ENCODE measurements at regions of chr1 and their contacts with region 1.

Region 1: DNA sequence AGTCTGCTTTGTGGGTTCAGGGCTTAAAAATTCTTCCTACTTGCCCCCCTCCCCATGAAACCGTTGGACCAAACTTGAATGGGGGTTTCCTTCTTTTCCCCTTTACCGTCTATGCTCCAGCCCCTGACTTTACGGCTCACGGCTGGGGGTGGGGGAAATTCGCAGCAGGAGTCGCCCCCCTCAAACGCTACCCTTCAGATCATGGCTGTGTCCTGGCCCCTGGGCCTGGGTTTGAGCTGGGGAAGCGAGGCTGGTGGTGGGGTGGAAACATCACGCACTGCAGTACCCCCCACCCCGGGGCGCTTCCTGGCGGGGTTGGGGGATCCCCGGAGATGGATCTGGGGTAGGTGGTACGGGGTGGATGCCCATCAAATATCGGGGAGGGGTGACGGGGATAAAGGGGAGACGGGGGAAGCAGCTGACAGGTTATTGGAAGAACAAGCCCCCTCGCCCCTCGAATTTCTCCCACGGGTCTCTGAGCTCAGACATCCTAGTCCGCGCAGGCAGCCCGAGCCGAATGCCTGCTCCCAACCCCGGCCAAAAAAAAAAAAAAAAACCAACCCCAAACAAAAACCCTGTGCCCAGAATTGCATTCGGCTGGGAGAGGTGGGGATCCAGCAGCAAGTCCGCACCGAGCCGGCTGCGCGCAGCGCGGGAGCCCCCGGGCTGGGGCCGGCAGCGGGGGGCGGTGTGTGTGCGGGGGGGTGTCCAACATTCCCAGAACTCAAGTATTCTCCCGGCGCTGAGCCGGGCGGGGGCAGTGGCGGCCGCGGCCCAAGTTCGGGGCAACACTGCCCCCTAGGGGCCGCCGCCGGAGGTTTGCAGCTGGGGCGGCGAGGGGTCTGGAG is 59.0 kb upstream of the ACOT11 start:
- DNase-seq: no peak
- H3K4me3 ChIP-seq: peak overlapping the region; percentile 56
- CTCF ChIP-seq: peak; percentile 84

Region 2: DNA sequence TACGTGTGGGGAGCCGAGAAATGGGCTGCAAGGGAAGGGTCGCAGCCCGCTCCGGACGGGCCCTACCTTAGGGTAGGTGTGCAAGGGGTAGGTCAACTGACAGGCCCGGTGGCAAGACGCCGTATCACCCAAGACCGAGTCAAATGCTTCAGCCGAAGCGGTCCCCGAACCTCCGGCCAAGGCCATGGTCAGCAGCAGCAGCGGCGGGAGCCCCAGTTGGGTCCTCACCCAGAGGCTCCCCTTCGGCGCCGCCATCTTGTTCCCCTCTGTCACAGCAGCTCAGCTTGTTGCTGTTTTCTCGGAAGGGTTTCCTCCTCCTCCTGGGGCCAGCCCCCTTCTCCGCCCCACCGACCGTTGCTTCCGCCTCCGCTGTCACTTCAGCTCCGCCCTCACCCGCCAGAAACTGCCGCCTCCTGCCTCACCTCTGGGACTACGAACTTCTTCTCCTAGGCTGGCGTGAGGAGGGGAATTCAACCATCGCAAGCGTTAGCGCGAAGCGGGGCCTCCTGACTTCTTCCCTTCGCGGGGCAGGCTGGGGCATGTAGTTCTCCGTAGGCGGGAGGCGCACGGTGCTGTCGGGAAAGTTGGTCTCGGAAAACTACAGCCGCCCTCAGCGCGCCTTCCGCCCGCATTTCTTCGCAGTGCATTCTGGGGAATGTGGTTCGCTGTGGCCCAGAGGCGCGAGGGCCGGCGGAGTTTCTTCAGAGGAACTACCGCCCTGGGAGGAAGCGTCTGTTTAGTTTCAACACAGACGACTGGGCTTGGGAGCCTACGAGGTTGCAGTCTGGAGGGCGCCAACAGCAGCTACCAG is 435.9 kb before region 1 on chr1 and contains the starts of genes TCEANC2 and TMEM59:
- CTCF ChIA-PET with region 1: interaction called, 10 read pairs
- POLR2A ChIA-PET with region 1: no interaction called
- DNase-seq: peak; percentile 95
- H3K4me3 ChIP-seq: peak within 1 kb of the TSS; percentile 98
- CTCF ChIP-seq: no peak

Region 3: DNA sequence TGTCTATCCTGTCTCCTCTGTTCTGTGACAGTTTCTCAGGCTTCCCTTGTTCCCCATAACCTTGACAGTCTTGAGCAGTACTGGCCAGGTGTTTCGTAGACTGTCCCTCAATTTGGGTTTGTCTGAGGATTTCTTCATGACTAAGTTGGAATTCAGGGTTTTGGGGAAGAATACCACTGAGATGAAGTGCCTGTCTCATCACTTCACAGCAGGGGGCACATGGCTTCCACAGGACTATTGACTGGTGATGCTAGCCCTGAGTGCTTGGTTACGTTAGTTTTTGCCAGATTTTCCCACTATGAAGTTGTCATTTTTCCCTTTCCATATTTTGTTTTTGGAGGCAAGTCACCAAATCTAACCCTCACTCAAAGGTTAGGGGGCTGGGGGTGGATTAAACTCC is 381.9 kb before region 1 on chr1:
- CTCF ChIA-PET with region 1: interaction called, 11 read pairs
- POLR2A ChIA-PET with region 1: no interaction called
- DNase-seq: no peak
- H3K4me3 ChIP-seq: no peak overlapping the region
- CTCF ChIP-seq: peak; percentile 60

Region 4: DNA sequence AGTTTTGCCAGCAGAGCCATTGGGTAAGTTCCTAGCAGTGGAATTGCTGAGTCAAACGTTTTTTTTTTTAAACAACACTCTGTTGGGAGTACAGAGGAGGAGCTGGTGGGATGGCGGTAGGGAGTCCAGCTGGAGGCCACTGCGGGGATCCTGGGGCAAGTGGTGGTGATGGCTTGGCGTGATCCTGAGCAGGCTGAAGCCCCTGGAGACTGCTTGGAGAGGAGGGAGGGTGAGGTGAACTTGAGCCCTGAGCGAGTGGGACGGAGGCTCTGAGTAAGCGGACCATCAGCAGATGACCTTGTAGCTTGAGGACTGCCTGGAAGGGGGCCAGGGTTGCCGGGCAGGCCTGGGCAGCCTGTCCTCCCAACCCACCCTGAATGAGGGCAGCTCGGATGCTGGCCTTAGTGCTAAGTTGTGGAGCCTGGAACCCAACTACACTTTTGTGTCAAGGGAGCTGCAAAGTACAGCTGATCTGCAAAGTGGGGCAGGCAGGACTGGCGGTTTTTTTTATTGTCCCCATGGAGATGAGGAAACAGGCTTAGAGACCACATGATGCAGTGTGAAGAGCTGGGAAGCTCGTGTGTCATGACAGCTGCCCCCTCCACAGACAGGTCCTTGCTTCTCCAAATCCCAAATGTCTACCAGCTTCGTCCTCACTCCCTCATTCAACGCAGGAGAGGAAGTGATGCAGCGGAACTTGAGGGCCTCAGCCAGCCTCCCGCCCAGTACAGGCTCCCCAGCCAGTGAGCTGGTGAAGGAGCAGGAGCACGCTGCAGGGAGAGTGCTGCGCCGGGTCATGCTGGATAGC is 268.8 kb before region 1 on chr1:
- CTCF ChIA-PET with region 1: interaction called, 19 read pairs
- POLR2A ChIA-PET with region 1: no interaction called
- DNase-seq: no peak
- H3K4me3 ChIP-seq: no peak overlapping the region
- CTCF ChIP-seq: no peak

Region 5: GRCh38 chr1:54273092-54273794 is 215.8 kb before region 1 on chr1:
- CTCF ChIA-PET with region 1: interaction called, 33 read pairs
- POLR2A ChIA-PET with region 1: no interaction called
- DNase-seq: no peak
- H3K4me3 ChIP-seq: no peak overlapping the region; the same call in 1 of the 2 replicates
- CTCF ChIP-seq: peak; percentile 83

Region 6: DNA sequence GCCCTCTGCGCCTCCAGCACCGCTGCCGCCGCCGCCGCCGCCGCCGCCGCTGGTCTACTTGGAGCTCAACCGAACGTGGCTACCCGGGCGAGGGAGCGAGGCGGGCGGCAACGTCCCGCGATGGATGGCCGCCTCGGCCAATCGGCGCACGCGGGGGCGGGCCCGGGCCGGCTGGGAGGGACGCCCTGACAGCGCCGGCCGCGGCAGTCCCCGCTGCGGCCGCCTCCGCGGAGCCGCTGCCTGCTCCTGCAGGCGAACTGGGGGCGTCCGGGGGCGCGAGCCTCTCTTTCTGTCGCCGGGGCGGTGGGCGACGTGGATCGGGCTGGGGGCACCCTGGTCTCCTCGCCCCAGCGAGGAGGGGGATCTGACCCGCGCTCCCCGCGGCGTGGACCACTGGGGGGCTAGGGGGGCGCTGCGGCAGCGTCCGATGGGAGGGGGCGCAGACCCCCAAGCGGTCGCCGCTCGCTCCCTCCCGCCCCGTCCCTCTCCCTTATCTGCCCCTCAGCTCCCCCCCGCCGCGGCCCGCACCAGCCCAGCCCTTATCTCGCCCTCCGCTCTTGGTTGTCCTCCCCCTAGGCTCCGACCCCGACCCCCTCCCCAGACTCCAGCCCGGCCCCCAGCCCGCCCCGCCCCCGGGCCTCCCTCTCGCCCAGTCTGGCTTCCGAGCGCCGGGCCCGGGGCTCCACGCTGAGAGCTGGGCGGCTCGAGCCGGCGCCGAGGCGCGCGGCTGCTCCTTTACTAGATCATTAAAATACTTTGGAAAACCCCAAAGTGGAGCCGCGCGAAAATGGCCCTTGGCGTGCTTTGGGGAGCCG is 82.5 kb before region 1 on chr1 and contains the start of gene SSBP3:
- CTCF ChIA-PET with region 1: interaction called, 71 read pairs
- POLR2A ChIA-PET with region 1: interaction called, 13 read pairs
- DNase-seq: no peak
- H3K4me3 ChIP-seq: peak within 1 kb of the TSS; percentile 79
- CTCF ChIP-seq: no peak

Region 7: GRCh38 chr1:54569339-54569738 is 80.3 kb after region 1 on chr1:
- CTCF ChIA-PET with region 1: no interaction called
- POLR2A ChIA-PET with region 1: no interaction called
- DNase-seq: no peak
- H3K4me3 ChIP-seq: no peak overlapping the region
- CTCF ChIP-seq: no peak